ENCODE measurements at regions of chr1 and their contacts with region 1.

Region 1: DNA sequence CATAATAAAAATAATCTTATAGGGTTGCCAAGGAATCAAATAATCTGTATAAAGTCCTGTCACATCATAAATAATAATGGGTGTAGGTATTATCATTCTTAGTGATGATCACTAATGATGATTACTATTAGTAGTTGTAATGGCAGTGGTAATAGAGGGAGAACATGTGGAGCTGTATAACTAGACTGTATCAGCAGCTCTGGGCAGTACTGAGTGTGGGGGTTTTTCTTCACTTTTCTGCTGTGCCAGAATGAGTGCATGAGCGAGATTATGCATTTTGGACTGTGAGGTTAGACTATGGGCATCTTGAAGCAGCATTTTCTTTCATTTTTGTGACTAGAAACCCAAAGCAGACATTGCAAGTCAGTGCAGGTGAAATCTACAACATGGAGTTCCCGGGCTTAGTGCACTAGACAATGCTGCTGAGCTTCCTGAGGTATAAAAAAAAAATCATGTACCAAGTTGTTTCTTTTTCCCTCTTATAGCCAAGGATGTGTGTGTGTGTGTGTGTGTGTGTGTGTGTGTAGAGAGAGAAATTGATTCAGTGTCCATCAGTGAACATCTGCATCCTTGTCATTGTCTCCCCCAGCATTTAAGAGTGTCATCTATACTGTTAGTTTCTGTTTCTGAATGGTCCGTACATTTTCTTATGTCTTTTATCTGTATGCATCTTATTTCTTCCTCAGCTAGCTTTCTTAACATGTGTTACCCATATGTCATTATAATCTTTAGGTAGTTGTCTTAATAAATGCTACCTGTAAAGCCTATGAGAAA is 86.6 kb downstream of the GIPC2 start:
- DNase-seq: no peak
- CTCF ChIP-seq: no peak

Region 2: DNA sequence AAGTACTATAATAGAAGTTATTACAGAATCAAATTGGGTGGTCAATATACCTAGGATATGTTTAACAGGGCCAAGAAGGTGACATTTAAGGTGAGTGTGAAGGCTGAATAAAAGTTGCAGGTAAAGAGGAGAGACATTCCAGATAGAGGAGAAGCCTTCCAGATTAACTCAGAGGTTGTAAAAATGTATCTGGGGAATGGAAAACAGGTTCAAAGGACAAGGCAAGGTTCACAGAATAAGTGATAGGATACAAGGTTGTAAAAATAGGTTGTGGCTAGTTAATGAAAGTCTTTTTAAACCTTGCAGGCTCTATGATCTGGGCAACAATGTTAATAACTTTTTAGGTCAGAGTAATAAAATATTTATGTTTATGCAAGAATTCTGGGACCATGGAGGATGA is 193.7 kb before region 1 on chr1:
- in situ Hi-C with region 1: no loop called
- DNase-seq: no peak
- CTCF ChIP-seq: no peak

Region 3: DNA sequence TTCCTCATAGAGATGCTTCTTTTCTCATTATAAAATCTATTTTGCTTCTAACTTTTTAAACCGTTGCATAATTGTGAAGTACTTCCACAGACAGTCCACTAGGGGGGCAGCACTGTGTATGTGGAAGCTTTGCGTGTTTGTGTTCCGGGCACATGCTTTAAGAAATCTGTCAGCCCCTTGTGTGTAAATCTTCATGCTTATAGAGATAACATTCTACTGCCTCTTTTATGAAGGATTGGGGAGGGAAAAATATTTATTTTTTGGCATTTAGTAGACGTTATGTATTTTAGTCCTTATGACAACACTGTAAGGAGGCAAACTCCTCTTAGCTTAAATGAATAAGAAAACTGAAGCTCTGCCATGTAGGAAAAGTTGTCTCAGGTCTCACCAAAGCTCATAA is 201.1 kb after region 1 on chr1:
- in situ Hi-C with region 1: no loop called
- DNase-seq: no peak
- CTCF ChIP-seq: peak; percentile 63

Region 4: DNA sequence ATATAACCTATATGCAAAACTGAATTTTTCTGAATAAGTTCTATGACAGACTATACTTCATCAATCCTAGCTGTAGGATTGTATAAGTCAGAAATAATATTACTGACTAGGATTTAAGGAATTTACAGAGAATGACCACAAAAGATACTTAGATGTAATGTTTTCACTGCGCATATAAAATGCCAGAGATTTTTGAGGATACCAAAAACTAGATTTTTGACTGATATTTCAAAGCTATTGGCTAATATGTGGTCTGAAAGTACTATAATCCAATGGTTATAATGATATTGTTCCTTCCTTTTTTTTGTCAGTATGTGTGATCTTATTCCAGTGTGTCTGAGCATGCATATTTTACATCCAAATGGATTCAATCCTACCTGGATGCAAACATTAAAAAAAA is 470.8 kb after region 1 on chr1:
- in situ Hi-C with region 1: loop called (anchors 5 kb)
- DNase-seq: no peak
- CTCF ChIP-seq: no peak

Region 5: GRCh38 chr1:78676347-78676982 is 544.1 kb after region 1 on chr1:
- in situ Hi-C with region 1: loop called (anchors 10 kb)
- DNase-seq: peak; percentile 44
- CTCF ChIP-seq: peak; percentile 60

Measured in GM13976 (cell line).